Mammary epithelial cell (primary cell): ENCODE measurements at regions of chr12 and their contacts with region 1.

Region 1: GRCh38 chr12:122681814-122682213 is 21.3 kb downstream of the HCAR2 start:
- DNase-seq: peak; percentile 30
- H3K4me3 ChIP-seq: no peak overlapping the region
- H3K27ac ChIP-seq: no peak overlapping the region
- H3K4me1 ChIP-seq: peaks cover 18% of the 10 kb centered on the region
- H3K27me3 ChIP-seq: no peaks in the 10 kb centered on the region
- CTCF ChIP-seq: no peak

Region 2: DNA sequence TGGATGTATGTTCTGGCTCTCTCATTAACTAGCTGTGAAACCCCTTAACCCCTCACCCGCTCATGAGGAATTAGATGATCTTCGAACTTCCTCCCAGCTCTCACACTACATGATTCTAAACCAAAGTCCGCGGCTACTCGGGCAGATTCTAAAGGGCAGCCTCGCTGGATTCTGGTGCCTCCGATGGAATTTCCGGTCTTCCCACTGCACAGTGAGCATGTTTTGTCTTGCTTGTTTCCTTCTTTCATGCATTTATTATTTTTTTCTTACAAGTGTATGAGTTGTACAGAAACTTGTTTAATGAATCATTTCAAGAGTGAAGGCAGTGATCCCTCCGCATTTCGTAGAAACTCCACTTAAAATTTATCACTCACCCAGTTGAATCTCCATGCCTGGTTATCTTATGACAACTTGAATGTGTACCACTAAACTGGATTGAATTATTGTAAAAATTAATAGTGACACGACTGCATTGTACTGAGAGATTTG is 39.3 kb after region 1 on chr12:
- CTCF ChIA-PET with region 1: no interaction called
- dilution Hi-C with region 1: no loop called
- in situ Hi-C with region 1: no loop called
- intact Hi-C with region 1: loop called (anchors 1 kb)
- DNase-seq: peak; percentile 97
- H3K4me3 ChIP-seq: peak overlapping the region in 2 of 3 experiments; percentile 8 to 43
- H3K27ac ChIP-seq: peak overlapping the region; percentile 100
- H3K4me1 ChIP-seq: peaks cover 32% of the 10 kb centered on the region
- H3K27me3 ChIP-seq: no peaks in the 10 kb centered on the region
- CTCF ChIP-seq: no peak

Region 3: DNA sequence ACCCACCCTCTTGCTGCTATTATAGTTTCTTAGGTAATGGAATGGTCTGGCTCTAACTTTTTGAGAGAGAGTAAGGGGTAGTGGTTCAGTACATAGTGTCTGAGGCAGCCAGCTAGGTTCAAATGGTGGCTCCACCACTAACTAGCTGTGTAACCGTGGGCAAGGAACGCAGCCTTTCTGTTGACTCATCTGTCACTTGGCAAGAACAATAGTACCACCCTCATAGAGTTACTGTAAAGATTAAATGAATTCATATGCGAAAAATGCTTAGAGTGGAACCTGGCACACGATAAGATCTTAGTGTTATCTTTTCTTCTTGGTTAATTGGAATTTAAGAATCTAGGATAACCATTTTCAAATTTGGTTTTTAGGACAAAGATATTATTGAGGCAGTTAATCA is 106.6 kb after region 1 on chr12:
- CTCF ChIA-PET with region 1: no interaction called
- dilution Hi-C with region 1: loop called (anchors 5 kb)
- in situ Hi-C with region 1: no loop called
- intact Hi-C with region 1: no loop called
- DNase-seq: peak; percentile 53
- H3K4me3 ChIP-seq: no peak overlapping the region
- H3K27ac ChIP-seq: no peak overlapping the region
- H3K4me1 ChIP-seq: peaks cover 29% of the 10 kb centered on the region
- H3K27me3 ChIP-seq: no peaks in the 10 kb centered on the region
- CTCF ChIP-seq: no peak

Region 4: GRCh38 chr12:122813310-122813713 is 131.5 kb after region 1 on chr12:
- CTCF ChIA-PET with region 1: no interaction called
- dilution Hi-C with region 1: no loop called
- in situ Hi-C with region 1: no loop called
- intact Hi-C with region 1: no loop called
- DNase-seq: no peak
- H3K4me3 ChIP-seq: no peak overlapping the region
- H3K27ac ChIP-seq: no peak overlapping the region
- H3K4me1 ChIP-seq: peaks cover 6% of the 10 kb centered on the region
- H3K27me3 ChIP-seq: no peaks in the 10 kb centered on the region
- CTCF ChIP-seq: no peak